H1 (cell line): ENCODE measurements at regions of chr6 and their contacts with region 1.

Region 1: GRCh38 chr6:149852180-149852579 is 12.0 kb downstream of the LRP11 start:
- DNase-seq: no peak
- H3K4me3 ChIP-seq: no peak overlapping the region
- H3K27ac ChIP-seq: no peak overlapping the region
- H3K4me1 ChIP-seq: peaks cover 0 to 7% (median 0%) of the 10 kb centered on the region in 4 experiments; a peak in 4 of 7 replicates
- H3K27me3 ChIP-seq: no peaks in the 10 kb centered on the region
- CTCF ChIP-seq: no peak
- EP300 ChIP-seq: no peak
- POLR2A ChIP-seq: no peak
- RAD21 ChIP-seq: no peak

Region 2: DNA sequence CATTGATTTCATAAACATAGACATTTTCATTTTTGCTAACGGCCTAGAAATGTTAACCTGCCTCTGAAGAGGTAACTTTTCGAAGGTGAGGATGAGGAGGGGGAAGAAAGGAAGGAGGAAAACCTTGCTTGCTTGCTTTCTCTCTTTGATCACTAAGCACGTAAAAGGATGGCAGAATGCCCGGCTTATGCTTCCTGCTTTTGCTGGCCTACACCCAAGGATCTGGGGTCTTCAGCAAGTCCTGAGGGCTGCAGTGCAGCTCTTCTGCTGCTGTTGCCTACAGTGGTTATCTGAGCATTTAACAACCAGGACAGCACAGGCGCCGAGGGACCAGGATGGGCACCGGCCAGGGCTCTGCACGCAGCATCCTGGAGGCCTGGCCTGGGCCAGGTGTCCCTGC is 685.4 kb before region 1 on chr6:
- CTCF ChIA-PET with region 1: no interaction called
- POLR2A ChIA-PET with region 1: no interaction called
- DNase-seq: no peak
- H3K4me3 ChIP-seq: no peak overlapping the region
- H3K27ac ChIP-seq: no peak overlapping the region
- H3K4me1 ChIP-seq: no peaks in the 10 kb centered on the region
- H3K27me3 ChIP-seq: no peaks in the 10 kb centered on the region
- CTCF ChIP-seq: no peak
- EP300 ChIP-seq: no peak
- POLR2A ChIP-seq: no peak
- RAD21 ChIP-seq: no peak

Region 3: GRCh38 chr6:149863697-149864577 is 11.8 kb after region 1 on chr6 and contains the start of gene LRP11:
- CTCF ChIA-PET with region 1: interaction called, 12 read pairs
- POLR2A ChIA-PET with region 1: interaction called, 6 read pairs
- DNase-seq: peak; percentile 66 to 93
- H3K4me3 ChIP-seq: peak within 1 kb of the TSS; percentile 48 to 80 (median 74)
- H3K27ac ChIP-seq: peak within 1 kb of the TSS; percentile 84
- H3K4me1 ChIP-seq: peaks cover 5 to 20% (median 11%) of the 10 kb centered on the region in 4 experiments
- H3K27me3 ChIP-seq: peaks cover 0 to 13% (median 5%) of the 10 kb centered on the region in 4 experiments; a peak in 5 of 7 replicates
- CTCF ChIP-seq: no peak
- EP300 ChIP-seq: no peak
- POLR2A ChIP-seq: peak; percentile 33 to 78
- RAD21 ChIP-seq: no peak
- total RNA-seq, gene LRP11: 20.0 TPM in 2 replicates

Region 4: DNA sequence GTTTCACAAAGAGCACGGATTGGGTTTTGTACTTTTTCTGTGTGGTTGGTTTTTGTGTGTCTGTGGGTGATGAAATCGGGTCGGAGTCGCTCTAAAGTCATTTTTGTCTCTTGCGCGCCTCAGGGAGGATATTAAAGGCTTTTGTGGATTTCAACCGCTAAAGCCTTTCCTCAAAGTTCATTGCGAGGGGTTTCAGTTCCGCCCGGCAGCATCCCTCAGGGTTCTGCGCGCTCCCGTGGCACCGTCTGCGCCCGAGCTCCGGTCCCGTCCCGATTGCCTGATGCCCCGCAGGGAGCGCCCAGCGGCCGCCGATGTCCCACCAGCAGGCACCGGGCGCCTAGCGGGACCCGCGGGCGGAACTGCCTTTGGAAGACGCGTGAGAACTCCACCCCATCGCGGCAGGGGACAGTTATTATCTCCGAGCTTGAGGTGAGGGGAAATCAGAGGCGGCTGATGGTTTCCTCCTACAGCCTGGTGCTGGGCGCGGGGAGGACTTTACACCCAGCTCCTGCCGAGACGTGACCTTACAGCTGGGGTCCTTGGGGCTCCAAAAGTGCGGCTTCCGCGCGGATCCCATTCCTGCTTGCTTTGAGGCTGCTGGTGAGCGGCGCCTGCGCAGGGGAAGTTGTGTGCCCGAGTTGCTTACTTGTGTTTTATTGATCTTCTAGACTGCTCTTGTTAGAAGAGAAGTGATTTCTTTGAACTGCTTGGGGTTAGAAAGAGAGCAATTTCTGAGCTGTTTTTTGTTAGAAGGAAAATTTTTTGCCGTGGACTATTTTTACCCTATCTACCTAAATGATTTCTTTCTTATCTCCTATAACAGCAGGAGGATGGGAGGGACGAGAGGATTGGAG is 138.7 kb after region 1 on chr6:
- CTCF ChIA-PET with region 1: no interaction called
- POLR2A ChIA-PET with region 1: no interaction called
- DNase-seq: peak in 1 of 2 experiments; percentile 70
- H3K4me3 ChIP-seq: peak overlapping the region; percentile 0 to 53 (median 29); a peak in 7 of 8 replicates
- H3K27ac ChIP-seq: no peak overlapping the region
- H3K4me1 ChIP-seq: peaks cover 2 to 21% (median 15%) of the 10 kb centered on the region in 4 experiments
- H3K27me3 ChIP-seq: peaks cover 67 to 93% (median 85%) of the 10 kb centered on the region in 4 experiments
- CTCF ChIP-seq: no peak
- EP300 ChIP-seq: no peak
- POLR2A ChIP-seq: no peak
- RAD21 ChIP-seq: no peak